ENCODE measurements at regions of chr7 and their contacts with region 1.

Region 1: DNA sequence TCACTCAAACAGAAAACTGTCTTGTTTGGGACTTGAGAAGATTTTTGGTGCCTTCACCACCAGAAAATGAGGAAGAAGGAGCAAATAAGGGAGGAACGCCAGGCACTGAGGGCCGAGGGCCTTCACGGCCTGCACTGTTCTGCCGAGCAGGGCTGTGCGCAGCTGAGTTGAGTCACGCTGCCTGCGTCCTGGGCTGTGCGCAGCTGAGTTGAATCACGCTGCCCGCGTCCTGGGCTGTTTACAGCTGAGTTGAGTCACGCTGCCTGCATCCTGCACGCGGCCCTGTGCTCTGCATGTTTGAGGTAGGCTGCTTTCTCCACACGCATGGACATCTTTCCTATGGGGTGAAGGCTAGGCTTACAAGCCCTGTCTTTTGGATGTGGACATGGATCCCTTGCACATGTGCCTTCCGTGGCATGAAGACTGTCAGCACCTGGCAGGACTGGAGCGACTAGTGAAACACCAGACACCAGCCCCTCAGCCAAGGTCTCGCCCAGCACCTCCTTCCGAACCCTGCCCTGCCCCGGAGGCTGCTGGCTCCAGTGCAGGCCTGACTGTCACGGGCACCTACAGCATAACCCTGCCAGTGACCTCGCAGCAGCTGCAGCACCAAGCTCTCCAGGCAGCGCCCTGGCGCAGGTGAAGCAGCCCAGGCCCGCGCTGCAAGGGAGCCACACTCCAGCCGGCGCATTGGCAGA is 96.7 kb downstream of the HTR5A start:
- DNase-seq: peak; percentile 76
- H3K4me3 ChIP-seq: no peak overlapping the region
- H3K27ac ChIP-seq: no peak overlapping the region
- H3K4me1 ChIP-seq: peaks cover 16% of the 10 kb centered on the region
- H3K27me3 ChIP-seq: no peaks in the 10 kb centered on the region
- CTCF ChIP-seq: no peak

Region 2: DNA sequence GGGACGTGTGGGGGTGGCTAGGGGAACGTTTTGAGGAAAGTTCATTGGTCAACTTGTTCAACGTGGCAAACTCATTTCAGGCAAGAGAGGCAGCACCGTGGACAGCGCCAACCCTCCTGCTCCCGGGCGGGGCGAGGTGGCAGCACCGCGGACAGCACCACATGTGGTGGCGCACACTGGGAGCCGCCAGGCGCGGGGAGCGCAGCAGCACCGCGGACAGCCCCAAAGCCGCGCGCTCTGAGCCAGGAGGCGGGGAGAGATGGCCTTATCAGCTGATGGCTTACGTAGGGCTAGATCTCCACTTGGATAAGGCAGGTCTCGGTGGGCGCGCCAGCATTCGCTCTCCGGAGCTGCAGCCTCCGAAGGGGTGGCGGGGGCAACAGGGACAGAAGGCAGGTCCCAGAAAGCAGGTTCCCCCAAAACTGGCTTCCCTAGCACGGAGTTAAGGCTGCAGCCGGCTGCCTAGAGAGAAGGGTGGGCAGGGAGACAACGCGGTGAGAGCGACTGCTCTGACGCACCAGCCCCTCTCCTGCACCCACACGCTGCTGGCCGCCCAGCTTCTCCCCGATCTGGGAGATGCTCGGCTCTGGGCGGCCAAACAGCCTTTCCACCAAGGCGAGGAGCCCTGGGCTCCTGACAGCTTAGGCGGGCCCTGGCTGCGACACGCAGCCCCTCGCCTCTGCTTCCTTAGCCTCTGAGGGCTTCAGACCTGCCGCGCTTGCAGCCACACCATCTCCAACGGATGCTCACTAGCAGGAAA is 96.7 kb before region 1 on chr7 and contains the start of gene HTR5A:
- CTCF ChIA-PET with region 1: no interaction called
- dilution Hi-C with region 1: no loop called
- in situ Hi-C with region 1: no loop called
- intact Hi-C with region 1: loop called (anchors 10 kb)
- DNase-seq: peak; percentile 77
- H3K4me3 ChIP-seq: no peak within 1 kb of the TSS
- H3K27ac ChIP-seq: no peak within 1 kb of the TSS
- H3K4me1 ChIP-seq: peaks cover 3% of the 10 kb centered on the region
- H3K27me3 ChIP-seq: peaks cover 5% of the 10 kb centered on the region
- CTCF ChIP-seq: no peak
- total RNA-seq, gene HTR5A: not detected

Region 3: GRCh38 chr7:155124477-155125127 is 42.2 kb before region 1 on chr7:
- CTCF ChIA-PET with region 1: no interaction called
- dilution Hi-C with region 1: no loop called
- in situ Hi-C with region 1: no loop called
- intact Hi-C with region 1: no loop called
- DNase-seq: no peak
- H3K4me3 ChIP-seq: no peak overlapping the region
- H3K27ac ChIP-seq: no peak overlapping the region
- H3K4me1 ChIP-seq: no peaks in the 10 kb centered on the region
- H3K27me3 ChIP-seq: no peaks in the 10 kb centered on the region
- CTCF ChIP-seq: no peak

Region 4: DNA sequence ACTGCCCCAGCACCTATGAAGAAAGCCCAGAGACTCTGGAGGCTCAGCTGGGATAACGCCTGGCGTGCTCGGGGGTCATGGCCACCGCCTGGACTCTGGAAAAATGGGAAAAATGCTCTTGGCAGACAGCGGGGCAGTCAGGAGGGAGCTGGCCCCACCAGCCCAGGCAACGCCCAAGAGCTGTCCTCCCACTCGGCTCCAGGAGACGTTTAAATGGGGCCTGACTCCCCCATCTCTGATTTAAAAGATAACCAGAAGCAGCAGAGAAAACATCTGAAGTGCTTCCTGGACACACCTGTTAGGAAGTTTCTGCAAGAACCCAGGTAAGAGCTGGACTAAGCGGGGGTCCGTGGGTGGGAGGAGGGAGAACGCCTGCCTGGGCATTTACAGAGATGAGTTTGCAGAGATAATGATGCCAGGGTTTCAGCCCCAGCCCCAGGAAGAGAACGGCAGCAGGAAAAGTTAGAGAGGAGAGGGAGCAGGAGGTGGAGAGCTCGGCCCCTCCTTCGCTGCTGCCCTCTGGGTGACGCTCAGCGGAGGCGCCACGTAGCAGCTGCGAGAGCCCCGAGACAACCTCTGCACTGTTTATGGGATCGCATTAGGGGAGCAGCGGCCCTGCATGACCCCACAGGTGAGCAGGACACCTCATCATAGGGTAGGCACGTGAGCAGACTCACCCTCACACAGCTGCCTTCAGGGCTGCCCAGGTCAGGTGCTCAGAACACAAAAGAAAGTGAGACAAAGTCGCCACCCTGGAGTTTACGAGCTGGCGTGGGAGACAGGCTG is 47.3 kb after region 1 on chr7:
- CTCF ChIA-PET with region 1: no interaction called
- dilution Hi-C with region 1: no loop called
- in situ Hi-C with region 1: no loop called
- intact Hi-C with region 1: no loop called
- DNase-seq: peak; percentile 58
- H3K4me3 ChIP-seq: peak overlapping the region in 2 of 3 experiments; percentile 25 to 34
- H3K27ac ChIP-seq: no peak overlapping the region
- H3K4me1 ChIP-seq: peaks cover 17% of the 10 kb centered on the region
- H3K27me3 ChIP-seq: no peaks in the 10 kb centered on the region
- CTCF ChIP-seq: no peak

Measured in mammary epithelial cell (primary cell).